Right cardiac atrium (tissue), 5 donors: ENCODE measurements at regions of chr16 and their contacts with region 1.

Region 1: DNA sequence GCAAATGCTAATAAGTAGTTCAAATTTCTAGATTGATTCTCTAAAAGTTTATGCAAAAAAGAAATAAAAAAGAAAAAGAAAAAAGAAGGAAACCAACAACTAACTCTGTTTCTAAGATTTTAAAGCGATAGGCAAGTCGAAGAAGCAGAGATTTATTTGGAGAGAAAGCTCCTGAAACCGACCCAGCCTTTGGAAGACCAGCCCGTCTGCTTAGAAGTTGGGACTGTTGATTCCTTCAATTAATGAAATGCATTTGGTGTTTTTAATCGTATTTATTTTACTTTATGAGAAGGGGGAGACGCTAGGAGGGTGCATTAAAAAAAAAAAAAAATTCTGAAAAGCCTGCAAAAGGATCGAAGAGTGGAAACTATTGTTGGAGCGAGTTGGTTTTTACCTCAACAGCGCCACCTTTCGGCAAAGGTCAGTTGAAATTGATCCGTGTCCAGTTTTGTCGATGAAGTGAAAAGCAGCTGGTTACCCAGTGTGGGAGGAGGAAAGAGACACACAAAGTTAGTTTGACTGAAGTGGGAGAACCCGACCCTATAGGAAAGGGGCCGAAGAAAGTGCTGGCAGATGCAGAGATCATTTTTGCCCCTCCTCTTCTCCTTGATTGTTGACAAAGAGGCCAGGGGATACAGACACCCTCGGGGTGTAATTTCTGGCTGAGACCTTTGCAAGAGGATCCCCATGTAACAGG is 1.5 kb upstream of the MAF start:
- DNase-seq: peak; percentile 75 to 87 (median 85)
- ATAC-seq: peak; percentile 29 to 36
- H3K4me3 ChIP-seq: peak overlapping the region; percentile 75
- H3K27ac ChIP-seq: no peak overlapping the region
- H3K4me1 ChIP-seq: no peaks in the 10 kb centered on the region
- H3K27me3 ChIP-seq: no peaks in the 10 kb centered on the region

Region 2: DNA sequence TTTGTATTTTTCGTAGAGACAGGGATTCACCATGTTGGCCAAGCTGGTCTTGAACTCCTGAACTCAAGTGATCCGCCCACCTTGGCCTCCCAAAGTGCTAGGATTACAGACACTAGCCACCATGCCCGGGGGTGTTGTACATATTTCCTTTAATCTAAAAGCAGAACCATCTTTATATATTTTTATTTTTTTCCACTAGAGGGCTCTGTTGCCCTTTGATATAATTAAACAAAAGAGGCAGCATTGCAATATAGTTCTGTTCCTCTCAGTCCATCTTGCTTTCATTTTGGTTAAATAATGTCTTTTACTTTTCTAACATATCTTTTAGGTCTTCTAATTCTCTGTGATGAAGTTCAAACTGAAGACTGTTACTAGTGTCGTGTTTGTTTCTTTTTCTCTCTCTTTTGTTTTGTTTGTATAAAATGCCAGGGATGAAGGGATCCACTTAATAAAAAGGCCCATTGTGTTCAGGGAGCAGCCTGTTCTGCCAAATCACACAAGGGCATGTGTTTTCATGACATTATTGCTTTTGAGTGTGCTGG is 1479.2 kb before region 1 on chr16:
- intact Hi-C with region 1: loop called in 1 of 4 experiments (anchors 10 kb)
- DNase-seq: peak in 1 of 3 donors; percentile 66
- ATAC-seq: peak; percentile 79 to 86
- H3K4me3 ChIP-seq: no peak overlapping the region
- H3K27ac ChIP-seq: peak overlapping the region; percentile 37
- H3K4me1 ChIP-seq: no peaks in the 10 kb centered on the region
- H3K27me3 ChIP-seq: no peaks in the 10 kb centered on the region

Region 3: GRCh38 chr16:78503602-78504001 is 1098.5 kb before region 1 on chr16:
- intact Hi-C with region 1: loop called (anchors 5 to 10 kb)
- DNase-seq: no peak
- ATAC-seq: no peak
- H3K4me3 ChIP-seq: no peak overlapping the region
- H3K27ac ChIP-seq: no peak overlapping the region
- H3K4me1 ChIP-seq: no peaks in the 10 kb centered on the region
- H3K27me3 ChIP-seq: no peaks in the 10 kb centered on the region

Region 4: DNA sequence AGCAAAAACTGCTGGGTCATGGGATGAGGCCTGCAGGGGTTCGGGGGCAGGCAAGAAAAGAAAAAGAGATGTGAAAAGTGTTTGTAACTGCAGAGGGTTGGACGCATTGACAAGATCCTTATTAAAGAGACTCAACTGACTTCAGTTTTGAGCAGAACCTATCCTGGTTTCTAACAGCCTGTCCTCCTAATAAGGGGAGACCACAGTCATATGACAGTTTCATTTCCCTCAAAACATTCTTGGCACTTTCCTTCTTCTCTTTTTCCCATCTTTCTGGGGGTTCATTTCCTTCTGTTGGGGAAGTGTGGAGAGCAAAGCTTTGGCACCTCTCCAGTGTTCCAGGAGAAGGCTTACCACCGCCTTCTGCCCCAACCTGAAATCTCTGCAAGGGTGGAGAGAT is 120.1 kb before region 1 on chr16:
- intact Hi-C with region 1: no loop called
- DNase-seq: no peak
- ATAC-seq: peak; percentile 43 to 52
- H3K4me3 ChIP-seq: no peak overlapping the region
- H3K27ac ChIP-seq: no peak overlapping the region
- H3K4me1 ChIP-seq: no peaks in the 10 kb centered on the region
- H3K27me3 ChIP-seq: no peaks in the 10 kb centered on the region

Region 5: GRCh38 chr16:79767421-79768275 is 165.6 kb after region 1 on chr16:
- intact Hi-C with region 1: loop called in 1 of 4 experiments (anchors 10 kb)
- DNase-seq: peak in 2 of 3 donors; percentile 50 to 60
- ATAC-seq: peak; percentile 47 to 53
- H3K4me3 ChIP-seq: peak overlapping the region; percentile 43
- H3K27ac ChIP-seq: peak overlapping the region; percentile 63
- H3K4me1 ChIP-seq: peaks cover 4% of the 10 kb centered on the region
- H3K27me3 ChIP-seq: no peaks in the 10 kb centered on the region

Region 6: DNA sequence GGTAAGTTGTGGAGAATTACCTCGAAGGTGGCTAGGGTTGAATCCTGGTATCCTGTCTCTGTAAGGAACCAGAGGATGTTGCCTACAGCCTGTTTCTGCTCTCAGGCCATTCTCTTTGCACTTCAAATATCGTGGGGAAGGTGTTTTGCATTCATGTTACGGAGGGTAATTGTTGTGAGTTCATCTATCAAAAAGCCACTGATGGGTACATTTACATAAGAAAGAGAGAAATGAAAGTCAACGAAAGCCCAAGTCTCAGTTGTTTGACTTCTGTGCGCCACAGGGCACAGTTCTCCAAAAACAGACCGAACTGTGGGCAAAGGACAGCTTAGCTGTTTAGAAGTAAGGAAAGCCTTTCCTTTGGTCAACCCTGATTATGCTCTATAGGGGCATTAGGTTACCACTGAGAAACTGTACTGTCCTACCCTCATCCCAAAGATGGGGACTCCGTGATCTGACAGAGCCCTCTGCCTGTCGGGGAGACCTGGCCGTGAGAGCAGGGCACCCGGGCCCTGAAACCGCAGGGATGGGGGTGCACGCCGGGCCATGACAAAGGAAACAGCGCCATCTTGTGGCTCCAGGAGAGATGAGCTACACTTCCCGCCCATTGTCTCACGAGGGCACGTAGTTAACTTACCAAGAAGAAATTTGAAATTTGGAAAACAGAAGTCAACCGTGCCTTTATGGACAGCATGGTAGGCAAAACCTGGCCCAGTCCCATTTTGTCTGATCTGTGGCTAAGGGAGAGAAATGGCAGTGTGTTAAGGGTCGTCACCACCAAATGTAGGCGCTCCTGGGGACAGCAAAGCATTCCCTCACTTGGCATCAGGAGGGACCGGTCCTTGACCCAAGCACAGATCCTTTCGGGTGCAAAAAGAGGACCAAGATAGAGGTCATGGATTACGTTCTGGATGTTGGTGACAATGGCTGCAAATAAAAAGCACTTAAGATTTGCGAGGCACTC is 864.2 kb after region 1 on chr16:
- intact Hi-C with region 1: loop called in 1 of 4 experiments (anchors 10 kb)
- DNase-seq: peak; percentile 46 to 76 (median 73)
- ATAC-seq: peak; percentile 75 to 82
- H3K4me3 ChIP-seq: no peak overlapping the region
- H3K27ac ChIP-seq: no peak overlapping the region
- H3K4me1 ChIP-seq: no peaks in the 10 kb centered on the region
- H3K27me3 ChIP-seq: no peaks in the 10 kb centered on the region